Activated naive CD4-positive, alpha-beta T cell treated with anti-CD3 and anti-CD28 coated beads for 36 hours (primary cell): ENCODE measurements at regions of chr12 and their contacts with region 1.

Region 1: GRCh38 chr12:26097046-26097878 is 27.6 kb downstream of the BHLHE41 start:
- DNase-seq: peak; percentile 73
- H3K4me3 Mint-ChIP-seq: no peak overlapping the region
- H3K27ac Mint-ChIP-seq: no peak overlapping the region
- H3K4me1 Mint-ChIP-seq: no peaks in the 10 kb centered on the region
- H3K27me3 Mint-ChIP-seq: peaks cover 8% of the 10 kb centered on the region

Region 2: GRCh38 chr12:25495331-25496097 is 601.7 kb before region 1 on chr12:
- CTCF ChIA-PET with region 1: no interaction called
- intact Hi-C with region 1: no loop called
- DNase-seq: no peak
- H3K4me3 Mint-ChIP-seq: no peak overlapping the region
- H3K27ac Mint-ChIP-seq: no peak overlapping the region
- H3K4me1 Mint-ChIP-seq: no peaks in the 10 kb centered on the region
- H3K27me3 Mint-ChIP-seq: peaks cover 2% of the 10 kb centered on the region

Region 3: GRCh38 chr12:26125400-26126339 is 28.4 kb after region 1 on chr12:
- CTCF ChIA-PET with region 1: no interaction called
- intact Hi-C with region 1: loop called (anchors 1 kb)
- DNase-seq: peak; percentile 53
- H3K4me3 Mint-ChIP-seq: peak overlapping the region; percentile 82
- H3K27ac Mint-ChIP-seq: no peak overlapping the region
- H3K4me1 Mint-ChIP-seq: peaks cover 23% of the 10 kb centered on the region
- H3K27me3 Mint-ChIP-seq: peaks cover 69% of the 10 kb centered on the region

Region 4: DNA sequence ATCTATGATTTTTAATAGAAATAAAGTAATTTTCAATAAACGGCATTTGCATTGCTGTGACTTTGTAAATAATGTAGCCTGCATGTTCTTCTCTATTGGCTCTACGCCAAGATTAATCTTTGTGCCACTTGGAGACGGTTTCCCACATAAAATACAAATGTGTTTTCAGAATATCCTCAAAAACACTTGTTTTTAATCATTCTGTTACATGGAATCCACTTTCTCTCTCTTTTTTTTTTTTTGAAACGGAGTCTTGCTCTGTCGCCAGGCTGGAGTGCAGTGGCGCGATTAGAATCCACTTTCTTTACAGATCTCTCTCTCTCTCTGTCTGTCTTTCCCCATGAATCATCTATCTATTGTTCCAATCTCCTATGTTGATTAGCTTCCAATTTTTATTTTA is 75.3 kb after region 1 on chr12:
- CTCF ChIA-PET with region 1: no interaction called
- intact Hi-C with region 1: no loop called
- DNase-seq: no peak
- H3K4me3 Mint-ChIP-seq: no peak overlapping the region
- H3K27ac Mint-ChIP-seq: no peak overlapping the region
- H3K4me1 Mint-ChIP-seq: no peaks in the 10 kb centered on the region
- H3K27me3 Mint-ChIP-seq: peaks cover 7% of the 10 kb centered on the region

Region 5: GRCh38 chr12:26434299-26435068 is 337.2 kb after region 1 on chr12:
- CTCF ChIA-PET with region 1: no interaction called
- intact Hi-C with region 1: loop called (anchors 2 kb)
- DNase-seq: peak; percentile 34
- H3K4me3 Mint-ChIP-seq: no peak overlapping the region
- H3K27ac Mint-ChIP-seq: no peak overlapping the region
- H3K4me1 Mint-ChIP-seq: no peaks in the 10 kb centered on the region
- H3K27me3 Mint-ChIP-seq: no peaks in the 10 kb centered on the region

Region 6: DNA sequence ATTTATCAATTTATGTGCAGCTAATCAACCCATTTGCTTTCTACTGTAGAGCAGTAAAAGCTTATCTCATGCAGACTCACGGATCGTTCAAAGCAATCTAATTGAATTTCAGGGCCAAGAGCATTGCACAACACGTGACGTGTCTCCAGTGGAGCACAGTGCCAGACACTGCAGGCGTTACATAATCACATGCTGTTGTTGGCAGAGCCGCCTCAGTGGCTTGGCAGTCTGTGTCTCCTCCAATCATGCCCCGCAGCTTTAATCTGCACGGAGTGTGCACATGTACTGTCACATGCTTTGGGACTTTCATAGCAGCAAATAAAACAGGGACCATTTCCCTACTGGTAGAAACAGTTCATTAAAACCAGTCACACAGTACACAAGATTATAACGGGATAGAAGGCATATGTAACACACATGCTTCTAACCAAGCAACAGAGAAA is 426.5 kb after region 1 on chr12:
- CTCF ChIA-PET with region 1: no interaction called
- intact Hi-C with region 1: loop called (anchors 1 kb)
- DNase-seq: no peak
- H3K4me3 Mint-ChIP-seq: no peak overlapping the region
- H3K27ac Mint-ChIP-seq: no peak overlapping the region
- H3K4me1 Mint-ChIP-seq: peaks cover 10% of the 10 kb centered on the region
- H3K27me3 Mint-ChIP-seq: no peaks in the 10 kb centered on the region

Region 7: DNA sequence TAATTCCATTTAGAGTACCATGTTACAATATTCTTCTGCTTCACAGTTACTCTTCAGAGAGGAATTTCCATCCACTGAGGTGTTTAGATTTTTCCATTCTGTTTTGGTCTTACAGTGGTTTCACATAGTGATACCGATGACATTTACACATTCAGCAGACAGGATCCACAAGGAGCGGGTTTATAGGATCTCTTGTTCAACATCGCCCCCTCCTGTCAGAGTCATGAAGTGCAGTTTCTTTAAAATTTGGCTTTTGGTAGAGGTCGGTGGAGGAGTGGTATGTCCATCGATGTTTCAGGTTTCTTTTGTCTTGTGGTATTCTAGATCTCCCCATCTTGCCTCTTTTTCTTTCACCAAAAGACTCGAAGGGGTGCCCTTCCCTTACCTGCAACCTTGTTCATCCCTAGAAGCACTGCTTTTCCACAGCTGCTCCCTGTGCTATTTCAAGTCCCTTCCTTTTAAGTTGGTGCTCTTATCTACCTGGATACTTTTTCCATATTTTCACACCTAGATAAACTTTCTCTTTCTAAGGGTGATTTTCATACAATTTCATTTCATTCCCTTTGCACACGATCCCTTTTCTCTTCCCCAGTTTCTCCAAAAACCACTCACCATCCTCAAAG is 554.4 kb after region 1 on chr12:
- CTCF ChIA-PET with region 1: no interaction called
- intact Hi-C with region 1: loop called (anchors 1 kb)
- DNase-seq: peak; percentile 59
- H3K4me3 Mint-ChIP-seq: no peak overlapping the region
- H3K27ac Mint-ChIP-seq: no peak overlapping the region
- H3K4me1 Mint-ChIP-seq: no peaks in the 10 kb centered on the region
- H3K27me3 Mint-ChIP-seq: no peaks in the 10 kb centered on the region

Region 8: GRCh38 chr12:26884765-26885576 is 787.7 kb after region 1 on chr12:
- CTCF ChIA-PET with region 1: no interaction called
- intact Hi-C with region 1: loop called (anchors 5 kb)
- DNase-seq: peak; percentile 92
- H3K4me3 Mint-ChIP-seq: peak overlapping the region; percentile 58
- H3K27ac Mint-ChIP-seq: no peak overlapping the region
- H3K4me1 Mint-ChIP-seq: peaks cover 6% of the 10 kb centered on the region
- H3K27me3 Mint-ChIP-seq: peaks cover 10% of the 10 kb centered on the region